ENCODE measurements at regions of chr6 and their contacts with region 1.

Region 1: DNA sequence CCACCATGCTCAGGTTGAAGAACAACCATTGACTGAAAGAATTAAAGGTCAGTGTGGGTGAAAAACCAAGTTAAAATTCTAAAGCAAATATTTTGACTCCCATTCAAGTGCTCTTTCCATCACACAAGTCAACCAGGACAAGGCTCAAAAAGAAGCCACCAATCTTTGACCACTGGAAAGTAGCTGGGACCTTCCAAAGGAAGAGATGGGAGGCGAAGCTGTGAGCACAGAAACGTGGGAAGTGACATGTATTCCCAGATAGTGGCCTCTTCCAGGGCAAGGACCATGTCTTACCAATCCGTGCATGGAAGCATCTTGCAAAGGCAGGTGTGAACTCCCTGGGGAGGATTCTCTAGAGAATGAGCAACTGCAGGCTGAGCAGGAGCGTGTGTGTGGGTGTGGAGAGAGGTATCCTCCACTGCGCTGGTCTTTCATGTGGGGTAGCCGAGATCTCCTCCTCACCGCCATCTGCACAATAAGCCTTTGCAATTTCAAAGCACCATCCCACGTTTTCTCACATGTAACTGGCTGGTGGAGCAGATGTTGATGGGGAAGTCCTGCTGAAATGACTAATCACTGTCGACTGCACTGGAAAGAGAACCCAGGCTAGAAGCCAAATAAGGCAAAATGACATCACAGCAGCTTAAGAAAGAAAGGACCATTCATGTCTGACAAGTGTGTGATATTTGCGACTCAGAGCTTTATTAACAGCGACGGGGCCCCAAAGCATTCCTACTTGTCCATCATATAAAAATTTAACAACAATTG is 189.4 kb upstream of the RREB1 start:
- DNase-seq: peak; percentile 81
- H3K4me3 Mint-ChIP-seq: no peak overlapping the region
- H3K27ac Mint-ChIP-seq: peak overlapping the region; percentile 77
- H3K4me1 Mint-ChIP-seq: peaks cover 23% of the 10 kb centered on the region
- H3K27me3 Mint-ChIP-seq: peaks cover 45% of the 10 kb centered on the region

Region 2: GRCh38 chr6:6676910-6677441 is 241.4 kb before region 1 on chr6:
- intact Hi-C with region 1: loop called (anchors 5 kb)
- DNase-seq: peak; percentile 95
- H3K4me3 Mint-ChIP-seq: peak overlapping the region; percentile 8
- H3K27ac Mint-ChIP-seq: no peak overlapping the region
- H3K4me1 Mint-ChIP-seq: peaks cover 29% of the 10 kb centered on the region
- H3K27me3 Mint-ChIP-seq: peaks cover 2% of the 10 kb centered on the region

Region 3: DNA sequence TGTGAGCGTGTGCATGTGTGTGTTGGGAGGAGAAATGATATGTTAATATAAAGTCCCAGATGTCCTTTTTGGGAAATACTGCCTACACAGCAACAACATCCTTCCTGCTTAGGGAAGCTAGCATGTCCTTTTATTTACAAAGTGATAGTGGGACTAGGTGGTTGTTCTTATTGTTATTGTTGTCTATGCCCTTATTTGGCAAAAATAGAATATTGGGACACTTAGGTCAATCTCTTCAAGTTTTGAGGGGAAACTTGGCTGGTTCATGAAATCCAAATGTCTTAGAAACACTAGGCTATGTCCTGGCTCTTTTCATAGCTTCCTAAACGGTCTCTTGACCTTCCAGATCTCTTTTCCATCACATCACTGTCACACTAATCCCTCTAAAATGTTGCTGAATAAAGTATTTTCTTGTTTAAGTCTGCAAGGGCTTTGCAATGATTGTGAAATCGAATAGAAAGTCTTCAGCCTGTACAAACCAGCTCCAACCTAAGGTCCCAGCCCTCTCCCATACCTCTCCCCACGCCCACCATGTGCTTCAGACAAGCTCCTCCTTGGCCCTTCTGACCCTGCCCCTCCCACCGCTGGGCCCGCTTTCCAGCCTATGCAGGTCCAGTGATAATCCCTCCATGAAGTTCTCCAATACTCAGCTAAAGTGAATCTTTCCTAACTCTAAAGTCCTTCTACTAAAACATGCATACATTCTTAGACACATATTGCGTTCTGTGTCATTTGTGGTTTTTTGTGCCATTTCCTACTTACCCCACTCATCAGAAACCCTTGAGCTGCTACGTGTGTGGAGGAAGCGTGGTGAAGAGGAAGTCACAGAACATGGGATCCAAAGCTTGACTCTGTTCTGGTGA is 124.8 kb before region 1 on chr6:
- intact Hi-C with region 1: loop called (anchors 1 kb)
- DNase-seq: peak; percentile 64
- H3K4me3 Mint-ChIP-seq: peak overlapping the region; percentile 35
- H3K27ac Mint-ChIP-seq: peak overlapping the region; percentile 35
- H3K4me1 Mint-ChIP-seq: peaks cover 43% of the 10 kb centered on the region
- H3K27me3 Mint-ChIP-seq: peaks cover 4% of the 10 kb centered on the region

Region 4: GRCh38 chr6:7073821-7074525 is 155.6 kb after region 1 on chr6:
- intact Hi-C with region 1: loop called (anchors 1 kb)
- DNase-seq: peak; percentile 89
- H3K4me3 Mint-ChIP-seq: no peak overlapping the region
- H3K27ac Mint-ChIP-seq: peak overlapping the region; percentile 51
- H3K4me1 Mint-ChIP-seq: peaks cover 12% of the 10 kb centered on the region
- H3K27me3 Mint-ChIP-seq: peaks cover 66% of the 10 kb centered on the region

Region 5: GRCh38 chr6:7140631-7141378 is 222.4 kb after region 1 on chr6:
- intact Hi-C with region 1: loop called (anchors 2 kb)
- DNase-seq: peak; percentile 94
- H3K4me3 Mint-ChIP-seq: peak overlapping the region; percentile 85
- H3K27ac Mint-ChIP-seq: peak overlapping the region; percentile 87
- H3K4me1 Mint-ChIP-seq: peaks cover 54% of the 10 kb centered on the region
- H3K27me3 Mint-ChIP-seq: no peaks in the 10 kb centered on the region